Sigmoid colon (tissue), 7 donors: ENCODE measurements at regions of chr11 and their contacts with region 1.

Region 1: DNA sequence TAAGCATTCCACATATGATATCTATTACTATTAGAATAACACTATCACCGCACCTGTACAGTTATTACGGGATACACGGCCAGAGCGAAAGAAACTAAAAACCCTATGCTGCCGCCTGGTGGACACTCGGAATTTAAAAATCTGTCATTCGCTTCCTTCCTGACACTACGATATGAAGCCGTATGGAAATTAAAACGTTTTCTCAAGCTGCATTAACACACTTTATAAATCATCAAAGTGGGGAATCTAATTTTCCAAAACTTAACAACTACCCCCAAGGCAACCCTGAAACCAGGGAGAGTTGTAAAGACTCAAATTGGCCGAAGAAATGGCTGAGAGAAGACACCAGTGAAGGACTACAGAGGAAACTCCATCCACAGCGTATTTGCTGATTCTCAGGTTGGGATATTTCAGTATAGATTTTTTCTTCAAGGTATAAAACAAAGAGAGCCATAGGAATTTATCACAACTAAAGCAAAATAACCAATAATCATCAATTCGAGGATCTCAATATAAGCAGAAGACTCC is 1.4 kb downstream of the CCDC73 start:
- DNase-seq: no peak
- H3K4me3 ChIP-seq: peak overlapping the region in 2 of 4 donors; percentile 3 to 20
- H3K27ac ChIP-seq: no peak overlapping the region
- H3K4me1 ChIP-seq: peaks cover 0 to 4% (median 2%) of the 10 kb centered on the region in 4 donors
- H3K27me3 ChIP-seq: no peaks in the 10 kb centered on the region
- CTCF ChIP-seq: peak; percentile 31 to 73 (median 58)
- EP300 ChIP-seq: no peak
- POLR2A ChIP-seq: no peak

Region 2: GRCh38 chr11:32323814-32324130 is 469.2 kb before region 1 on chr11:
- intact Hi-C with region 1: loop called (anchors 2 kb)
- DNase-seq: no peak
- H3K4me3 ChIP-seq: no peak overlapping the region
- H3K27ac ChIP-seq: no peak overlapping the region
- H3K4me1 ChIP-seq: no peaks in the 10 kb centered on the region
- H3K27me3 ChIP-seq: peaks cover 0 to 7% (median 0%) of the 10 kb centered on the region in 3 donors
- CTCF ChIP-seq: no peak
- EP300 ChIP-seq: no peak
- POLR2A ChIP-seq: no peak

Region 3: DNA sequence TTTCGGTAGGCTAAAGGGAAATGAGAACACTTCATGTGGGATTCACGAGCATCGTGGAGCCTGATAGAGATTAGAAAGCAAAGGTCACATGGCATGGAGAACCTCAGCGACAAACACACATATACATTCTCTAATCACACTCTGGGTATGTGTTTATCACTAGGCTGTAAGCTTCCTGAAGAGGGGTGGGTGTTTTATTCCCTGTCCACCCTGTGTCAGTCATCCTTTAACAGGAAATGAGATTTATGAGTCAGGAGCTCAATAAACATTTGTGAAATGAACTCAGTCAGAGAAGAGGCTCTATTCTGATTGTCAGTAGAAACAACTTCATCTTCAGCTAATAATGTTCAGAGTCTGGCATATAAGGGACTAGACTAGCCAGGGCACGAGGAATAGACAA is 281.1 kb before region 1 on chr11:
- intact Hi-C with region 1: no loop called
- DNase-seq: no peak
- H3K4me3 ChIP-seq: no peak overlapping the region
- H3K27ac ChIP-seq: no peak overlapping the region
- H3K4me1 ChIP-seq: no peaks in the 10 kb centered on the region
- H3K27me3 ChIP-seq: no peaks in the 10 kb centered on the region
- CTCF ChIP-seq: no peak
- EP300 ChIP-seq: no peak
- POLR2A ChIP-seq: no peak

Region 4: GRCh38 chr11:32893343-32894148 is 100.5 kb after region 1 on chr11:
- intact Hi-C with region 1: loop called (anchors 2 kb)
- DNase-seq: peak; percentile 68
- H3K4me3 ChIP-seq: peak overlapping the region; percentile 83 to 97 (median 92)
- H3K27ac ChIP-seq: peak overlapping the region; percentile 93 to 99 (median 96)
- H3K4me1 ChIP-seq: peaks cover 0 to 27% (median 18%) of the 10 kb centered on the region in 4 donors
- H3K27me3 ChIP-seq: no peaks in the 10 kb centered on the region
- CTCF ChIP-seq: peak in 3 of 4 experiments; percentile 6 to 49 (median 28)
- EP300 ChIP-seq: no peak
- POLR2A ChIP-seq: no peak